ENCODE measurements at regions of chr10 and their contacts with region 1.

Region 1: DNA sequence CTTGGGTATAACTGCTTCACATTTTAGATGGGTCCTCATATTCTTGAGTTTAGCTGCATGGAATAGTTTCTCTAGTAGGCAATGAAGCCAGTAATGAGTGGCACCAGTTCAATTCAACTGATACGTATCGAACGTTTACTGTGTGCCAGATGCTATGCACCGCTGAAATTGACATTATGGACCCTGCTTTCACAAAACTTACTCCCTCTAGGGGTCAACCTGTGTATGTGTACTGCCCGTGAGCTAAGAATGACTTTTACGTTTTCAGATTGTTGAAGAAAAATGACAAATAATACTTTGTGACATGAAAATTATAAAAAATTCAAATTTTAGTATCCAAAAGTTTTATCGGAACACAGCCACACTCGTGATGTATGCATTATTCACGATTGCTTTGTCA is 95.5 kb downstream of the ZMYND11 start:
- DNase-seq: no peak
- H3K4me3 ChIP-seq: no peak overlapping the region
- H3K27ac ChIP-seq: no peak overlapping the region
- H3K27me3 ChIP-seq: no peaks in the 10 kb centered on the region
- CTCF ChIP-seq: peak; percentile 49

Region 2: GRCh38 chr10:266974-267425 is 36.3 kb after region 1 on chr10:
- CTCF ChIA-PET with region 1: no interaction called
- POLR2A ChIA-PET with region 1: no interaction called
- DNase-seq: no peak
- H3K4me3 ChIP-seq: no peak overlapping the region
- H3K27ac ChIP-seq: no peak overlapping the region
- H3K27me3 ChIP-seq: no peaks in the 10 kb centered on the region
- CTCF ChIP-seq: no peak

Region 3: DNA sequence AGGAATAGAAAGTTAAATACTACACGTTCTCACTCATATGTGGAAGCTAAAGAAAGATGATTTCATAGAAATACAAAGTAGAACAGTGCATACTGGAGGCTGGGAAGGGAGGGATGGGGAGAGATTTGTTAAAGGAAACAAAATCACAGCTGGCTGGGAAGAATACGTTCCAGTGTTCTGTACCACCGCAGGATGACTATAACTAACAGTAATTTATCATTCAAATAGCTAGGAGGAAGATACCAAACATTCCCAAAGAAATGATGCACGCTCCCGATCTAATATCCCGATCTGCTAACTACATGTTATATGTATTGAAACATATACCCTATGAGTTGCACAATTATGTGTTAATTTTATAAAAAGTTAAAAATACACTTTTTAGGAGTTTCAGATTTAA is 66.8 kb after region 1 on chr10:
- CTCF ChIA-PET with region 1: no interaction called
- POLR2A ChIA-PET with region 1: no interaction called
- DNase-seq: no peak
- H3K4me3 ChIP-seq: peak overlapping the region; percentile 11; the same call in 1 of the 2 replicates
- H3K27ac ChIP-seq: peak overlapping the region; percentile 82
- H3K27me3 ChIP-seq: no peaks in the 10 kb centered on the region
- CTCF ChIP-seq: no peak

Region 4: DNA sequence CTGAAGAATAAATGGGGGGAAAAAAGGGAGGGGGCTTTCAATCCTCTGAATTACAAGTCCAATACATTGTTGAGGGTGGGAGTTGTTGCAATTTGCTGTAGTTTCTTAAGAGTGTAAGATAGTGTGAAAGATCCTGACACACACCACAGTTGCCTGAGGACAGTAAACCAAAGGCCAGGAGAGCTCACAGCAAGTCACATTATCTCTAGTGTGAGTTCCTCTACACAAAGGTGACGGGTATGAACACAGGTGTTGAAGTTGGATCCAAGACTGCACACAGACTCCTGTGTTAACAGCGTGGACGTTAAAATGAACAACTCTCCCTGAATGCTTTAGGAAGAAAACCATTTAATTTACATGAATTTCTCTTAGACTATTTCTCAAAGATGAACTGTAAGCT is 688.7 kb after region 1 on chr10:
- CTCF ChIA-PET with region 1: interaction called, 11 read pairs
- POLR2A ChIA-PET with region 1: no interaction called
- DNase-seq: no peak
- H3K4me3 ChIP-seq: no peak overlapping the region
- H3K27ac ChIP-seq: no peak overlapping the region
- H3K27me3 ChIP-seq: no peaks in the 10 kb centered on the region
- CTCF ChIP-seq: no peak

Measured in AG04450 (cell line).